ENCODE measurements at regions of chr2 and their contacts with region 1.

Region 1: GRCh38 chr2:62705007-62705829 is at the start of gene EHBP1:
- DNase-seq: peak; percentile 97
- H3K4me3 Mint-ChIP-seq: peak within 1 kb of the TSS; percentile 85
- H3K27ac Mint-ChIP-seq: peak within 1 kb of the TSS; percentile 61
- H3K4me1 Mint-ChIP-seq: peaks cover 34% of the 10 kb centered on the region
- H3K27me3 Mint-ChIP-seq: peaks cover 6% of the 10 kb centered on the region
- total RNA-seq, gene EHBP1: 23.7 and 24.4 TPM in 2 replicates

Region 2: DNA sequence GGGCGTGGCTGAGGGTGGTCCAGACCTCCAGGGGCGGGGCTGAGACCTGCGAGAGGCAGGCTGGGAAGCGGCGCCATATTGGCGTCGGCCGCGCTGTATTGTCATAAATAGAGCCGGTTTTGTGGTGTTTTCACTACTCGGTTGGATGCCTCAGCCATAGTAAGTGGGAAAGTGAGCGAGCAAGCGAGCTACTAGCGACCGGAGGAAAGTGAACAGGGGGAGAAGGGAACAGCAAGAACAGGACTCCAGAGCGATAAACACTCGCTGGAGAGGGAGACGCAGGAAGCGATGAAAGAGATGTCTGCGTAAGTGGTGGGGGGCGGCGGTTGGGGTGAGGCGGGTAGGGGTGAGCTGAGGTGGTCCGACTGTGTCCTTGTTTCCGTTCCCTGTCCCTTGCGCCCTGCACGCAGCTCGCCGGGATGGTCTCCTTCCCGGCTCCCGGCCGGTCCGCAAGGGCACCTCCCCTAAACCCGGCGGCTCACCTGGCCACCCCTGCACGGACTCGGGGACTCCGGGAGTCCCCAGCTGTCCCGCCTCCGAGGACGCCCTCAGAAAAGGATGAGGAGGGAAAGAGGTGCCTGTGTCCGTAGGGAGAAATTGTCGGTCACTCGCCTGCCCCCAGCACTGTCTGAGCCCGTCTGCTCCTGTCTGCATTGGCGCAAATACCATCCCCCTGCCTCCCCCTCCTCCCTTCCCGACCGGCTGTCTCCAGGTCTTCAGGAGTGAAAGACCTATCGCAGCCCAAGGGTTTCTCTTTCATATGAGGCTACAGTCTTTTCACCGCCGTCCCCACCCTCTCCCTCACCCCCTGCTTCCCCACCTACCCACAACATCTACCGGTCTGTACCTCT is 1948.8 kb before region 1 on chr2 and contains the start of gene PAPOLG:
- intact Hi-C with region 1: loop called (anchors 1 kb)
- DNase-seq: peak; percentile 94
- H3K4me3 Mint-ChIP-seq: peak within 1 kb of the TSS; percentile 99
- H3K27ac Mint-ChIP-seq: peak within 1 kb of the TSS; percentile 99
- H3K4me1 Mint-ChIP-seq: peaks cover 31% of the 10 kb centered on the region
- H3K27me3 Mint-ChIP-seq: no peaks in the 10 kb centered on the region
- total RNA-seq, gene PAPOLG: 17.2 and 22.2 TPM in 2 replicates

Region 3: DNA sequence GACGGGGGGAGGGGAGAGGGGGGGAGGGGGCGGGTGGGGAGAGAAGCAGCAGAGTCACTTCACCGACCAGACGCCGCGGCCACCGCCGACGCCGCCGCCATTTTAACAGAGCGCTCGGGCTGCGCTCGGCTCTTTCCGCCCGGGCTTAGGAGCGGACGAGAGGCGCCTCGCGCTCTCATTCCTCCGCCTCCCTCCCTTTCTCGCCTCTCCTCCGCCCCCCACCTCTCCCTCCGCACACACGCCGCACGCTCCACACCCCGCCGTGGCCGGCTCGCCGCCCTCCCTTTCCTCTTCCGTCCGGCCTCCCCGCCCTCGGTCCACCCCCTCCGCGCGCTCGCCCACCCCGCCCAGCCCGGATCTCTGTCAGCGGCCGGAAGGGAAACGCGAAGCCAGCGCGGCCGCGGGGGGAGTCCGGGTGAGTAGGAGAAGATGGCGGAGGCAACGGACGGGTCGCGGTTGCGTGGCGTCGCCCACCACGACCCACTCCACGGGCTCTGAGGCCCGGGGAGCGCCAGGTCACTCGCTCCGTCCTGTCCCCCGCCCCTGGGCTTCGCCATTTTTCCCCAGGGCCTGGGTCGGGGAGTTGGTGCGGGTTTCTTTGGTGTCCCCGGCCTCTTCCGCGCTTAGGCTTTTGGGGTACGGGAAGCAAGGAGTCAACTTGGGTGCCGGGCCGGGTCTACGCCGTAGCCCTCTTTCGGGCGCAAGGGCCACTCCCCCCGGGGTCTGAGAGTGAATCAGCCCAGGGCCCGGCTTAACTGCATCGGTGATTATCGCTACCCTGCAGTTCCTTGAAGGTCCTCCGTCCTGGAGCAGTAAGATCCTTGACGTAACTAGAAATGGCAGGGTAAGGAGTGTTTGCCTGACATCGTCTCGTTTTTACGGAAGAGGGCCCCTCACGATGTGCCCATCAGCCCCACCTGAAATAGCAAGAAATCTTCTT is 1234.0 kb before region 1 on chr2 and contains the start of gene USP34:
- intact Hi-C with region 1: loop called (anchors 5 kb)
- DNase-seq: peak; percentile 88
- H3K4me3 Mint-ChIP-seq: peak within 1 kb of the TSS; percentile 95
- H3K27ac Mint-ChIP-seq: peak within 1 kb of the TSS; percentile 94
- H3K4me1 Mint-ChIP-seq: peaks cover 28% of the 10 kb centered on the region
- H3K27me3 Mint-ChIP-seq: no peaks in the 10 kb centered on the region
- total RNA-seq, gene USP34: 91.3 and 98.1 TPM in 2 replicates

Region 4: GRCh38 chr2:61764035-61764800 is 941.0 kb before region 1 on chr2:
- intact Hi-C with region 1: loop called (anchors 5 kb)
- DNase-seq: peak; percentile 96
- H3K4me3 Mint-ChIP-seq: peak overlapping the region; percentile 91
- H3K27ac Mint-ChIP-seq: peak overlapping the region; percentile 97
- H3K4me1 Mint-ChIP-seq: peaks cover 24% of the 10 kb centered on the region
- H3K27me3 Mint-ChIP-seq: no peaks in the 10 kb centered on the region

Region 5: GRCh38 chr2:61905372-61906185 is 799.6 kb before region 1 on chr2 and contains the start of gene COMMD1:
- intact Hi-C with region 1: loop called (anchors 5 kb)
- DNase-seq: peak; percentile 78
- H3K4me3 Mint-ChIP-seq: peak within 1 kb of the TSS; percentile 97
- H3K27ac Mint-ChIP-seq: peak within 1 kb of the TSS; percentile 81
- H3K4me1 Mint-ChIP-seq: peaks cover 18% of the 10 kb centered on the region
- H3K27me3 Mint-ChIP-seq: no peaks in the 10 kb centered on the region
- total RNA-seq, gene COMMD1: 25.4 and 28.9 TPM in 2 replicates

Region 6: GRCh38 chr2:62505750-62506420 is 199.3 kb before region 1 on chr2 and contains the start of gene TMEM17:
- intact Hi-C with region 1: loop called (anchors 5 kb)
- DNase-seq: peak; percentile 4
- H3K4me3 Mint-ChIP-seq: peak within 1 kb of the TSS; percentile 81
- H3K27ac Mint-ChIP-seq: peak within 1 kb of the TSS; percentile 21
- H3K4me1 Mint-ChIP-seq: peaks cover 11% of the 10 kb centered on the region
- H3K27me3 Mint-ChIP-seq: peaks cover 18% of the 10 kb centered on the region
- total RNA-seq, gene TMEM17: 0.15 and 0.23 TPM in 2 replicates

Region 7: GRCh38 chr2:63588385-63589147 is 883.3 kb after region 1 on chr2 and contains the starts of genes MDH1 and WDPCP:
- intact Hi-C with region 1: loop called (anchors 1 kb)
- DNase-seq: peak; percentile 90
- H3K4me3 Mint-ChIP-seq: peak within 1 kb of the TSS; percentile 97
- H3K27ac Mint-ChIP-seq: peak within 1 kb of the TSS; percentile 90
- H3K4me1 Mint-ChIP-seq: peaks cover 38% of the 10 kb centered on the region
- H3K27me3 Mint-ChIP-seq: no peaks in the 10 kb centered on the region
- total RNA-seq, gene MDH1: 186 and 197 TPM in 2 replicates
- total RNA-seq, gene WDPCP: 5.2 and 7.7 TPM in 2 replicates

Measured in activated T-helper 1 cell treated with anti-CD3 and anti-CD28 coated beads, Interleukin-12 subunit alpha, Interleukin-12 subunit beta, Interleukin-2, Interleukin-4 antibody, amounts not matched to agents 30 ng/mL and 10 ng/mL and 1 ng/mL, durations not matched to agents 14 hours and 24 hours and 36 hours (primary cell).